ENCODE measurements at regions of chr11 and their contacts with region 1.

Region 1: GRCh38 chr11:116224154-116224888 is 548.5 kb downstream of the BUD13 start:
- DNase-seq: peak in 9 of 14 experiments; percentile 2 to 37 (median 7)
- ATAC-seq: no peak
- H3K4me3 ChIP-seq: no peak overlapping the region
- H3K4me3 Mint-ChIP-seq: no peak overlapping the region
- H3K27ac ChIP-seq: no peak overlapping the region
- H3K27ac Mint-ChIP-seq: no peak overlapping the region
- H3K4me1 ChIP-seq: no peaks in the 10 kb centered on the region
- H3K4me1 Mint-ChIP-seq: no peaks in the 10 kb centered on the region
- H3K27me3 ChIP-seq: no peaks in the 10 kb centered on the region
- H3K27me3 Mint-ChIP-seq: peaks cover 28% of the 10 kb centered on the region
- CTCF ChIP-seq: peak; percentile 51

Region 2: DNA sequence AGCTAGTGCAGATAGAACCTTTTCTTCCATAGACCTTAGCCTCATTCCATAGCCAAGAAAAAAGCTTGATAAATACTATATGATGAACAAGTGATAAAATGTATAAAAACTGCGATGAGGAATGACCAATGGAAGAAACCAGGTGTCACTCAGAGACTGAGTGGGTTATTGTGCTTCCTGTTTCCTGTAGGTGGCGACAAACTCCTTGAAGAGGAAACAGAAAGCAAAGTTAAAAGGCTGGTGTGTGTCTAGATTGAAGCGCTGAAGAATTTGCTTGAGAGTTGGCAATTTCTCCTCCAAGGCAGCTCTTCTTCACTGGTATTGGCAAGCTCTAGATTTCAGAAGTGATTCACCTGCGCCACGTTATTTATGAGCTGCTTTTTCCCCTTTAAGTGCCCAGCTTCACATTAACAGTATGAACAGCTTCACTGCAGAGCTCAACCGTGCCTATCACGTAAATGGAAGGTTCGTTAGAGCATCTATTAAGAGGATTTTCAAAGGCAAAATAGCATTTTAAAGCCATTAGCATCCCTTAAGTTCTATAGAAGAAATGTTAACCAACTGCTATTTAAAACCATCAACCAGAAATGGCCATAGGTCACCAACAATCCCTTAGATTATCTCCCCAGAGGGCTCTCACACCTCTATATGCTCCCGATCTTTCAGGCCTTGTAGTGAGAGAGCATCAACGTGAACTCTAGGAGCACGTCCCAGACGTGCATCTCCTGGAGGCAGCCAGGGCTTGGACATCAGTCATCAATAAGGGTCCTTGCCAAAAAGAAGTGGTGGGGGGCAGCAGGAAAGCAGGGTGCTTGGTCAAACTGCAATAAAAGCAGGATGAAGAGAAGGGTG is 899.5 kb before region 1 on chr11:
- CTCF ChIA-PET with region 1: no interaction called
- POLR2A ChIA-PET with region 1: no interaction called
- intact Hi-C with region 1: loop called in 1 of 2 experiments (anchors 2 kb)
- DNase-seq: peak in 4 of 14 experiments; percentile 5 to 62 (median 57)
- ATAC-seq: peak; percentile 41
- H3K4me3 ChIP-seq: no peak overlapping the region
- H3K4me3 Mint-ChIP-seq: no peak overlapping the region
- H3K27ac ChIP-seq: no peak overlapping the region
- H3K27ac Mint-ChIP-seq: no peak overlapping the region
- H3K4me1 ChIP-seq: no peaks in the 10 kb centered on the region
- H3K4me1 Mint-ChIP-seq: peaks cover 9% of the 10 kb centered on the region
- H3K27me3 ChIP-seq: no peaks in the 10 kb centered on the region
- H3K27me3 Mint-ChIP-seq: no peaks in the 10 kb centered on the region
- CTCF ChIP-seq: peak; percentile 60